Prostate gland (tissue), 2 donors: ENCODE measurements at regions of chr18 and their contacts with region 1.

Region 1: DNA sequence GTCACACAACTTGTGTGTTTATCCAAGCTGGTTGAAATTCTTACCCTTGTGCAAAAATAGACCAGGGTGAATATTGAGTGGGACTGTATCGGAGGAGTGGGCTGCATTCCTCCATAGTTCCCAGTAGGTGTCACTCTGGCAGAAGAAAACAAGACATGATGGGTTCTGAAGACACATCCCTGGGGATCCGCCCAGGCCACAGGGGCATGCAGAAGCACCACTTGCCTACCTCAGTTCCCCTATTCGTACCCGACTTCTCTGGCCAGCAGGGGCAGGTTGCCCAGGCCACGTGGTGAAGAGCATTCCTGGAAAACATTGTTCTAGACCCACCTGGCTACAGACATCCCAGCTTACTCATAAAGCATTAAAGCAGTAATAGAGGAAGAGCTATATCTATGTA is 168.2 kb downstream of the FAM210A start:
- DNase-seq: no peak
- H3K4me3 ChIP-seq: no peak overlapping the region
- H3K27ac ChIP-seq: no peak overlapping the region
- H3K4me1 ChIP-seq: no peaks in the 10 kb centered on the region
- H3K27me3 ChIP-seq: no peaks in the 10 kb centered on the region
- CTCF ChIP-seq: peak in 2 of 4 experiments; percentile 40 to 51
- POLR2A ChIP-seq: no peak

Region 2: DNA sequence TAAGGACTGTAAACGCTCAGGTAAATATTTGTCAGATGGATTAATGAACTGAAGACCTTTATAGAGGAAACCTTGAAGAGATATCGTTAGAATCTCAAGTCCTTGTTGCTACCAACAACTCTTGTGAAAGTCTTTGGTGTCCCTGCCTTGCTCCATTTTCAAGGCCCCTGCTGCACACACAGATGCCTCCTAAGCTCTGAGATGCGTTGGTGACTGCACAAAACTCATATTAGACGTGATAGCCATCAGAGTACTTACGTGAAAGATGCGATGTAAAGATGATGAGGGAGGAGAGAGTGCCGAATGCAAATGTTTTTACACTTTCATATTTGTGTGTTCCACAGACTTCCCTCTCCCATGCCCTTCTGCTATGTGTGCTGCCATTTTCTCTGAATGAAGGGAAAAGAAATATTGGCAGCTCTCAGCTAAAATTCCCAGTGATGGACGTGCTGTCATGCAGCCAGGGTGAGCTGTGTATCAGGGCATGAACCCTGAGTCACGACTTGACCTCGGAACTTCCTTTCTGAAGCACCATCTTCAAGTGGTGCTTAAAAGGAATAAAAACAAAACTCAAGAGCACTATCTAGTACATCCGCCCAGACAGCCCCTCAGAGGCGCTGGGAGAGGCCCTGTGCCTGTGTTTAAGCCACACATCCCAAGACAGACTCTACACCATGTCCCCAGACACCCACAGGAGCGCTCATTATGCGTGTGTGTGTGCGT is 50.8 kb after region 1 on chr18:
- intact Hi-C with region 1: no loop called
- DNase-seq: no peak
- H3K4me3 ChIP-seq: no peak overlapping the region
- H3K27ac ChIP-seq: no peak overlapping the region
- H3K4me1 ChIP-seq: no peaks in the 10 kb centered on the region
- H3K27me3 ChIP-seq: no peaks in the 10 kb centered on the region
- CTCF ChIP-seq: no peak
- POLR2A ChIP-seq: no peak

Region 3: DNA sequence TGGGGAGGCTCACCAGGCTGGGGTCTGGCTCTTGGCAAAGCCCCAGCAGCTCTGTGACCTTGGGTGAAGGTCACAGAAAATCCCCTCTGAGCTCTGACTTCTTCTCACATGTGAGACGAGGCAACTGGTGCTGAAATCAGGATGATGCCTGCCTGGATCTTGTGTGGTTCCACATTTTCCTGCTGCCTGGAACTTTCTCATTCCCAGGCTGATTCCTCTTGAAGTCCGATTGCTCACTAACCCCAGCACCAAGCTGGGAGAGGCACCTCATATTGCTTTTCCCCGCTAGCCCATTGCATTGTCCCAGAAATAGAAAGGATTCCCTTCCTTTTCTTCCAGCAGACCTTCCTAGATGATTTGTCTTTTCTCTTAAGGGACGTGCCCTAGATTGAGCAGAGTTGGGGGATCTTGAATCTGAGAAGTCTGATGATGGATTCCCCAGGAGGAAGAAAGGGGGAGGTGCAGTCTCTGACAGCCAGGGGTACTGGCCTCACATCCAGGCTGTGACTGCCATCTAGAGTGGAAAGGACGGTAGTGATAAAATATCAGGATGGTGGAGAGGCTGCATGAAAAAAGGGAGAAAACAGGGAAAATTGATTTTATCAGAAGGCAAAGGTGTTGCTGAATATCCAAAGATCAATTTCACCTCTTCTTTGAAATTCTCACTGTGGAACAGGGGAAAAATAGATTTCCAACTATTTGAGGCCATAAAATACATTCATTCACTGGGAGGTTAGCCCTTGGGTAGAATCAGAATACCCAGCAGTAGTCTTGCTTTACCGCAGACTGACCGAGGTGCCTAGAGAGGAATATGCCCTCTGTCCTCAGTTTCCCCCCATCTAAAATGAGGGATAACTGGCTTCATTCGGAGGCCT is 72.0 kb after region 1 on chr18:
- intact Hi-C with region 1: loop called (anchors 5 kb)
- DNase-seq: peak; percentile 37
- H3K4me3 ChIP-seq: no peak overlapping the region
- H3K27ac ChIP-seq: no peak overlapping the region
- H3K4me1 ChIP-seq: no peaks in the 10 kb centered on the region
- H3K27me3 ChIP-seq: no peaks in the 10 kb centered on the region
- CTCF ChIP-seq: peak; percentile 16 to 83 (median 72)
- POLR2A ChIP-seq: no peak